WTC11 (cell line): ENCODE measurements at regions of chr11 and their contacts with region 1.

Region 1: DNA sequence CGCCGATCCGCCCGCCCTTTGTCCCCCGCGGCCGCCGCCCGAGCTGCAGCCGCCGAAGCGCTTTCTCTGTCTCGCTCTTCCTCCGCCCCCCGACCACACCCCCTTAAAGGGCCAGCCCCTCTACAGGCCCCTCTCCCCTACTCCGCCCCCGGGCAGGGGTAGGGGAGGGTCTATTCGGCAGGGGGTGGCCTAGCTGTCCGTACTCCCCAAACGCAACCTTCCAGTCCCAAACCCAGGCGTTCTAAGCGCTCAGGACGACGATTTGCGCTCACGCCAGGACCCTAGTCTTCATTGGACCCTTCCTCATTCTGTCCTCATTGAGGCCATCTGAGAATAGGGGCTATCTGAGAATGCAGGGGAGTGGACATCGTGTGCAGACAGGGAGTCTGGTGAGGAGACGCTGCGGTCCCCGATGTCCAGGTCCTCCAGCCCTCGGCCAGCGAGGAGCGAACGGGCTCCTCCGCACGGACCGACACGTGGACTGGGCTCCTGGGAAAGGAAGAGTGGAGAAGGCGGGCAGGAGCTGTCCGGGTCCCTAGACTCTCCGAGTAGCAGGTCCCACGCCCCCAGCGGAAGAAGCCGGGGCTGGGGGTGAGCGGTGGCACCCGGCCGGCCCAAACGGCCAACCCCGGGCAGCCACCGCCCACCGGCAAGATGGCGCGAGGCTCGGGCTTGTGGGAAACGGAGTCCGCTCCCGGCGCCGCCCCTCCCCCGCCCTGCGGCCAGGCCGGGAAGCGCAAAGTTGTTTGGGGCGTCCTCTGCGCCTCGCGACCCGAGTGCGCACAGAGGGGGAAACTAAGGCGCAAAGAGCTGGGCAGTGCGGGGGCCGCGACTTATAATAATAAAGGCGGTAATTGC is at the start of gene PPP1R14B:
- DNase-seq: peak; percentile 95
- ATAC-seq: peak; percentile 55
- H3K4me3 Mint-ChIP-seq: peak within 1 kb of the TSS; percentile 88
- H3K27ac Mint-ChIP-seq: peak within 1 kb of the TSS; percentile 97
- H3K4me1 Mint-ChIP-seq: peaks cover 50% of the 10 kb centered on the region
- H3K27me3 Mint-ChIP-seq: no peaks in the 10 kb centered on the region
- CTCF ChIP-seq: no peak
- total RNA-seq, gene PPP1R14B: 435 to 471 TPM (median 458 TPM) in 3 replicates

Region 2: GRCh38 chr11:64204464-64204989 is 42.6 kb before region 1 on chr11:
- CTCF ChIA-PET with region 1: interaction called, 65 read pairs
- POLR2A ChIA-PET with region 1: no interaction called
- DNase-seq: peak; percentile 82
- ATAC-seq: peak; percentile 88
- H3K4me3 Mint-ChIP-seq: no peak overlapping the region
- H3K27ac Mint-ChIP-seq: peak overlapping the region; percentile 88
- H3K4me1 Mint-ChIP-seq: peaks cover 6% of the 10 kb centered on the region
- H3K27me3 Mint-ChIP-seq: no peaks in the 10 kb centered on the region
- CTCF ChIP-seq: peak; percentile 31; the same call in 1 of the 2 replicates

Region 3: DNA sequence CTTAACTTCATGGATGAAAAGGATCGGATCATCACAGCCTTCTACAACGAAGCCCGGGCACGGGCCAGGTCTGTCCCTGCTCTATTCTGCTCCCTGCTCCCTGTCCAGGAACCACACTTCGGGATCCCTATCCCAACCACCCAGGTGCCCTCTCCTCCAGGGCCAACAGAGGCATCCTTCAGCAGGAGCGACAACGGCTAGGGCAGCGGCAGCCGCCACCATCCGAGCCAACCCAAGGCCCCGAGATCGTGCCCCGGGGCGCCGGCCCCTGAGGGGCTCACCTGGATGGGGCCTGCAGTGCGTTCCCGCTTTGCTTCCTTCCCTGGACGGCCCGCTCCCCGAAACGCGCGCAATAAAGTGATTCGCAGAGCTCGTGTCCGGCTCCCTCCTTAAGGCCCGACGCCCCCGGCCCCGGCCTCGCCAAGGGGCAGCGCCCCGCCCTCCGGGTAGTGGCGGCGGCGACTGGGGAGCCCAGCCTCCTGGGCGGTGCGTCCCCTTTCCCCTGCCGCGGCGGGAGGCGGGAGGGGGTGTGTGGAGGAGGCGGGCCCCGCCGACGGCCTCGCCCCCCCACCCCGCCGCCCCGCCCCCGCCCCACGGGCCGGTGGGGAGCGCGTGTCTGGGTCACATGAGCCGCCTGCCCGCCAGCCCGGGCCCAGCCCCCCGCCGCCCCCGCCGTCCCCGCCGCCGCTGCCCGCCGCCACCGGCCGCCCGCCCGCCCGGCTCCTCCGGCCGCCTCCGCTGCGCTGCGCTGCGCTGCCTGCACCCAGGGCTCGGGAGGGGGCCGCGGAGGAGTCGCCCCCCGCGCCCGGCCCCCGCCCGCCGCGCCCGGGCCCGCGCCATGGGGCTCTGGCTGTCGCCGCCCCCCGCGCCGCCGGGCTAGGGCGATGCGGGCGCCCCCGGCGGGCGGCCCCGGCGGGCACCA is 12.9 kb before region 1 on chr11 and contains the start of gene VEGFB:
- CTCF ChIA-PET with region 1: interaction called, 35 read pairs
- POLR2A ChIA-PET with region 1: interaction called, 8 read pairs
- DNase-seq: peak; percentile 61
- ATAC-seq: peak; percentile 17; the same call in 1 of the 2 replicates
- H3K4me3 Mint-ChIP-seq: peak within 1 kb of the TSS; percentile 85
- H3K27ac Mint-ChIP-seq: peak within 1 kb of the TSS; percentile 15; the same call in 1 of the 2 replicates
- H3K4me1 Mint-ChIP-seq: peaks cover 30% of the 10 kb centered on the region
- H3K27me3 Mint-ChIP-seq: peaks cover 16% of the 10 kb centered on the region
- CTCF ChIP-seq: no peak
- total RNA-seq, gene VEGFB: 51.7 to 62.2 TPM (median 59.7 TPM) in 3 replicates

Region 4: DNA sequence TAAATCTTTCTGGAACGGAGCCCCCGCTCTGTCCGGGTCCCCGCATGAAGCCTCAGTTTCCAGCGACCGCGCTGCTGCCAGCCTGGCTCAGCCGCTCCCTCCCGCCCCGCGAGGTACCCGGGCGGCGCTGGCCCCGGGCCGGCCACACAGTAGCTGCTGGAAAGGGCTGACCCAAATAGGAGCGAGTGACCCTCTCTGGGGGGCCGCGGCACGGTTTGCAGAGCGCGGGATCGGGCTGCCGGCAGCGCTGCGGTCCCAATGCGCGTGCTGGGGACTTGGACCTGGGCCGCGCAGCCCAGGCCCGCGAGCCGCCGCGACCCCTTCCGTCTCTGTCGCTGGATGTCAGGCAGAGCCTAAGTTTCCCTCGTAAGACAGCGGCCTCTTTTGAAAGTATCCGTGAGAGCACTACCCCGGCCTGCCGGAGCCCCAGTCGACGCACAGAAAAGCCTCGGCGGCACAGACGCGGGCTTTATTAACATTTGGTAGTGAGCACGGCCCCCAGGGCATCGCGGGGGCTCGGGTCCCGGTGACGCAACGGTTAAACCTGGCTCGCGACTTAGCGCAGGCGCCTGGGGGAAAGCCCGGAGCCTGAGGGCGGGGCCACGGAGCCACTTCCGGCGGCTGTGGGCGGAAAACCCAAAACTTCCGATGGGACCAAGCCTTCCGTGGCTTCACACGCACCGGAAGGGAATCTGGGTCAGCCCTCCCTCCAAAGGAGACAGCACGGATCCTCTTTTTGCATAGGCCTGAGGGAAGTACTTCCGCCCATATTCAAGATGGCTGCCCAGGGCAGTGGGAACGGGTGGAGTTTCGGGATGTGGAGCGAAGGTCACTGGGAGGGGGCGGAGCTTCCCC is 22.5 kb after region 1 on chr11:
- CTCF ChIA-PET with region 1: interaction called, 75 read pairs
- POLR2A ChIA-PET with region 1: interaction called, 25 read pairs
- DNase-seq: peak; percentile 98
- ATAC-seq: peak; percentile 83
- H3K4me3 Mint-ChIP-seq: peak overlapping the region; percentile 99
- H3K27ac Mint-ChIP-seq: peak overlapping the region; percentile 100
- H3K4me1 Mint-ChIP-seq: peaks cover 21% of the 10 kb centered on the region
- H3K27me3 Mint-ChIP-seq: no peaks in the 10 kb centered on the region
- CTCF ChIP-seq: no peak

Region 5: DNA sequence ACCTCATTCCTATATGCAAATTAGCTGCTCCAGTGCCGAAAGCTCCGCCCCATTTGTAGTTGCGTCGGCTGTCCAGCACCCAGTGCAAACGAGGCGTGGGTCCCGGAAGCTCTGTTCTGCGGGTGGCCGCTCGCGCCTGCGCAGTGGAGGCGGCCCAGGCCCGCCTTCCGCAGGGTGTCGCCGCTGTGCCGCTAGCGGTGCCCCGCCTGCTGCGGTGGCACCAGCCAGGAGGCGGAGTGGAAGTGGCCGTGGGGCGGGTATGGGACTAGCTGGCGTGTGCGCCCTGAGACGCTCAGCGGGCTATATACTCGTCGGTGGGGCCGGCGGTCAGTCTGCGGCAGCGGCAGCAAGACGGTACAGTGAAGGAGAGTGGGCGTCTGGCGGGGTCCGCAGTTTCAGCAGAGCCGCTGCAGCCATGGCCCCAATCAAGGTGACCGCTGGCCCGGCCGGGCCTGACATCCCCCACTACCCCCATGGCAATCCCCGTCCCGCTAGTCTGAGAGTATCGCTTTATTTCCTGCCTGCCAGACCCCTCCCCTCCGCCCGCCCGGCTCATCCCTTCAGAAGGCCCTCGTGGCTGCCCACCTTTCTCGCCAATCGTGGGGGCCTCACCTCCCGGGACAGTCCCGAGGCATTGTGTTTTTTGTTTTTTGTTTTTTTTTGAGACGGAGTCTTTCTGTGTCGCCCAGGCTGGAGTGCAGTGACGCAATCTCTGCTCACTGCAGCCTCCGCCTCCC is 71.0 kb after region 1 on chr11 and contains the start of gene PRDX5:
- CTCF ChIA-PET with region 1: interaction called, 16 read pairs
- POLR2A ChIA-PET with region 1: interaction called, 3 read pairs
- DNase-seq: peak; percentile 90
- ATAC-seq: peak; percentile 71
- H3K4me3 Mint-ChIP-seq: peak within 1 kb of the TSS; percentile 90
- H3K27ac Mint-ChIP-seq: peak within 1 kb of the TSS; percentile 99
- H3K4me1 Mint-ChIP-seq: peaks cover 17% of the 10 kb centered on the region
- H3K27me3 Mint-ChIP-seq: no peaks in the 10 kb centered on the region
- CTCF ChIP-seq: no peak
- total RNA-seq, gene PRDX5: 255 to 293 TPM (median 282 TPM) in 3 replicates

Region 6: GRCh38 chr11:64638018-64638665 is 391.0 kb after region 1 on chr11:
- CTCF ChIA-PET with region 1: no interaction called
- POLR2A ChIA-PET with region 1: no interaction called
- DNase-seq: peak; percentile 43
- ATAC-seq: peak; percentile 78
- H3K4me3 Mint-ChIP-seq: peak overlapping the region; percentile 72
- H3K27ac Mint-ChIP-seq: no peak overlapping the region
- H3K4me1 Mint-ChIP-seq: peaks cover 8% of the 10 kb centered on the region
- H3K27me3 Mint-ChIP-seq: peaks cover 49% of the 10 kb centered on the region
- CTCF ChIP-seq: no peak